Activated CD4-positive, alpha-beta memory T cell treated with anti-CD3 and anti-CD28 coated beads, Interleukin-2, amount 10 ng/mL, durations not matched to agents 7 days and 5 days (primary cell): ENCODE measurements at regions of chr3 and their contacts with region 1.

Region 1: DNA sequence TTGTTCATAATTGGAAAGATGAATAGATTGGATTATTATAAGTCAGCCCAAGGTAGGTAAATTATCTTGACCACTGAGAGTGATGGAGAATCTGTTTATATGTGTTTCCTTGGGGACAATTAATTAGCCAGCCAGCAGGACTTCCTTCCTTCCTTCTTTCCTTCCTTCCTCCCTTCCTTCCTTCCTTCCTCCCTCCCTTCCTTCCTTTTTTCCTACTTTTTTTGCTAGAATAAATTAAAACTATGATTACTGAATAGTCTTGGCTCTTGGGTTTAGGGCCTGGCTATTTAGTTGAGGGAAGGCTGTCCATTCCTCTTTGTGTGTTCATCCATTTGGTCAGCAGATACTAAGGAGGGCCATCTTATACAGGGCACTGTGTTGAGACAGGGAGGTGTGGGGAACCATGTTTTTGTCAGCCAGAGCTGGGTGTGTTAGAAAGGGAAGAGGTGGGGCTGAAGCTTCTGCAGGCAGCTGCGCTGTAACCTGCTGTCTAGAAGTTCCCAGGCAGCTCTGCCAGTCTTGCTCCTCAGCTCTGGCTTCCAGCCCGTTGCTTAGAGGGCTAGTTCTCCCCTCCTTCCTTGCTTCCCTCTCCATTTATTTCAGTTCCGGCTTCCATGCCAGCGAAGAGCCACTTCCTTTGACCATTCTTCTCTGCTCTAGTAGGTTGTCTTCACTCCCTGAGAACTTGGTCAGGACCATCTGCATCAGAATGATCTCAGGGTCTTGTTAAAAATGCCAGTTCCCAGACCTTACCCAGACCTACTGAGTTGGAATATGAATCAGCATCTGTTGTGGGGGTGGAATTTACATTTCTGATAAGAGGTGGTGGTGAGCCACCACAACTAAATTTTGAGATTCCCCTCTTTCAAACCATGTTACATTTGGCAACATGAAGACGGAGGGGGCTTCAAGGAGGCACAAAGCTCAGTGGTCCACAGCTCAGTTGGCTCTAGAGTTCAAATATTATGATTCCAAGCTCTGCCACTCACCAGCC is 113.9 kb downstream of the DGKG start:
- DNase-seq: no peak
- H3K4me3 Mint-ChIP-seq: no peak overlapping the region
- H3K27ac Mint-ChIP-seq: no peak overlapping the region
- H3K4me1 Mint-ChIP-seq: no peaks in the 10 kb centered on the region
- H3K27me3 Mint-ChIP-seq: peaks cover 23% of the 10 kb centered on the region

Region 2: DNA sequence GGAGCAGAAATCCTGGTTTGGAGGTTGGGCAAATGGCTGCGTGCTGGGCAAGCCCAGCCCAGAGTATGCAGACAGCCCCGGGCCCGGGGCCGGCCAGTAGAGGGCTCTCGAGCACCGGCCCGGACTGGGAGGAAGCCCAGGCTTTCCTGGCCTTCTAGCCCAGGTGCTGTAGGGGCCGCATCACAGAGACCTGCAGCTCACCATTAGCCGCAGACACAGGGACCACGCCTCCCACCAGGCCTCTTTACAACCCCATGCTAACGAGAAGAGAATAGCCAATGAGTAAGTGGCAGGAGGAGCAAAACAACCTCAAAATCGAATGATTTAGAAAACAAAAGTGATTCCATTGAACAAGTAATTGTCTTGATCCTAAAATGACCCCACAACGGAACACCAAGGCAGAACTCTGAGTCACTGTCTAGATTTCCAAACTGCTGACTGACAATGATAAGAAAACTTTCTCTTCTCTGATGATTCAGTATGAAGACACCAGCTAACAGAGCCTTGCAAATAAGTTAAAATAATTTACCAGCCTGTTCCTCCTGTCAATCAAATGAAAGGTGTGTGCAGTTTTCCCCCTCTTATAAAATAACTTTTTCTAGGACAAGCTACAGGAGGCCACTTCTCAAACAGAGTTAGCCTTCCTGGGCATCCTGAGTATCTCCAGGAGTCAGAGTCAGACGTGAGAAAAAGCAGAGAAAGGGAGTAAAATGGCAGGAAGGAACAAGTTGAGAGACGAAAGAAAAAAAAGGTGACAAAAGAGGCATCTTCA is 11.7 kb after region 1 on chr3:
- CTCF ChIA-PET with region 1: interaction called, 11 read pairs
- POLR2A ChIA-PET with region 1: no interaction called
- DNase-seq: peak; percentile 71
- H3K4me3 Mint-ChIP-seq: no peak overlapping the region
- H3K27ac Mint-ChIP-seq: no peak overlapping the region
- H3K4me1 Mint-ChIP-seq: peaks cover 7% of the 10 kb centered on the region
- H3K27me3 Mint-ChIP-seq: peaks cover 13% of the 10 kb centered on the region

Region 3: DNA sequence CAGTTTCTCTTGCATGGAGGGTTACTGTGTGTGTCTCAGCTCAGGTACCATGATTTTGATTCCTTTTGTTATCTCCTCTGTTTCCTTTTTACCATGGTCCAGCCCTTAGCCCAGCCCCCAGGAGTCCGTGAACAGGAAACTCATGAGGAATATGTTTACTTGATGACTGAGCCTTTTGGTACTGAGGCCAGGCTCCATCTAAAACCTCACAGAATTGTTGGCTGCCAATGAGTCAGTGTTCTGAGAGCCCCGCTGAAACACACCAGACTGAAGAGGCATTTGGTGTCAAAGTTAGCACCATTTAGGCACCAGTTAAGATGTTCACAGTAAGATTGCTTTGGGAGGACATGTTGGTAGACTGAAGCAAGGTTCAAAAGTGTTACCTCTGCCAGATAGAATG is 33.1 kb after region 1 on chr3:
- CTCF ChIA-PET with region 1: no interaction called
- POLR2A ChIA-PET with region 1: no interaction called
- DNase-seq: no peak
- H3K4me3 Mint-ChIP-seq: no peak overlapping the region
- H3K27ac Mint-ChIP-seq: no peak overlapping the region
- H3K4me1 Mint-ChIP-seq: no peaks in the 10 kb centered on the region
- H3K27me3 Mint-ChIP-seq: peaks cover 9% of the 10 kb centered on the region

Region 4: GRCh38 chr3:186532598-186533072 is 284.5 kb after region 1 on chr3:
- CTCF ChIA-PET with region 1: no interaction called
- POLR2A ChIA-PET with region 1: no interaction called
- DNase-seq: no peak
- H3K4me3 Mint-ChIP-seq: no peak overlapping the region
- H3K27ac Mint-ChIP-seq: no peak overlapping the region
- H3K4me1 Mint-ChIP-seq: peaks cover 26% of the 10 kb centered on the region
- H3K27me3 Mint-ChIP-seq: no peaks in the 10 kb centered on the region